ENCODE measurements at regions of chr1 and their contacts with region 1.

Region 1: DNA sequence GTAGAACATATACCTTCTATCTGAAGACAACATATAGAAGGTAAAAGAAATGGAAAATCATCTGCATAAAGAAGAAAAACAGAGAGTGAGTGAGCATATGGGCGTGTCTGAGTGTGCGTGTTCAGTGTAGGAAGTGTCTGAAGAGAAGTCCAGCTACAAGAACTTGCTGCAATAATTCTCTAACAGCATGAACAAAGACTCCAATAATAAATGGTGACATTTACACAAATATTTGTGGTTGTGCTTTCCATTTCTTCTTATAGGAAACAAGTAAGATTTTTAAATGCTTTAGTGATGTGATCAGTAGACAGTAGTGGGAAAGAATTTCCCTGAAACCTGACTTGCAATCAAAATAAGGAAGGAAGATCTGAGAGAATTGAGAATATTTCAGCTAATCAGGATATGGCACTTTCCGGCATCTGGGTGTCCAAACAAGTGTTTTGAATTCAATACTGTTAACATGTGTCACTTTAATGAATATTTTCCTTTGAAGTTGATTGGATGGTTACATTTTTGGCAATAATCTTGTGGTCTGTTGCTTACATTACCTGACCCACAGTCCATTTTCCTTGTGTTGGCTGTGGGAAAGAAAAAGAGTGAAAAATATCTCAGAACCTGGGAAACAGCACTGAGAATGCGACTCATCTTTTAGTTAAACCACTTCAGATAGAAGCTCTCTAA is 154.0 kb downstream of the TGFB2 start:
- DNase-seq: peak; percentile 83
- H3K4me3 ChIP-seq: peak overlapping the region in 1 of 3 experiments; percentile 60
- H3K27ac ChIP-seq: peak overlapping the region; percentile 93
- H3K4me1 ChIP-seq: peaks cover 29% of the 10 kb centered on the region
- H3K27me3 ChIP-seq: no peaks in the 10 kb centered on the region
- CTCF ChIP-seq: no peak
- POLR2A ChIP-seq: no peak

Region 2: DNA sequence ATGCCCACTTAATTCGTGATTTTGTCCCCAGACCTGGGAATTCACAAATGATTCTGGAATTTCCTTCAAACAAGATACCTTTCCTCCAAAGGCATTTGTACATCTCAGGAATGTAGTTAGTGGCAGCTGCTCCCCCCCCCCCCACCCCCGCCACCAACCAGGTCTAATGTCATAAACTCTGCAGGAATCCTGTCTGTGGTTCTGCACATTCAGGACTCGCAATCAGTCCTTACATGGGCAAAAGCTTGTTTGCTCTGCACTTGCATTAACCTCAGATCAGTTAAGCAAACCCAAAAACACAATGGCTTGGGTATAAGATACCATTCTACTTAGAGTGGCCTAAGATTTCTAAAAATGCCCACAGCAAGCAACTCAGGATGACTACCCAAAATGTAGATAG is 10.2 kb before region 1 on chr1:
- CTCF ChIA-PET with region 1: interaction called, 3 read pairs
- POLR2A ChIA-PET with region 1: interaction called, 3 read pairs
- dilution Hi-C with region 1: no loop called
- intact Hi-C with region 1: loop called (anchors 1 kb)
- DNase-seq: no peak
- H3K4me3 ChIP-seq: no peak overlapping the region
- H3K27ac ChIP-seq: no peak overlapping the region
- H3K4me1 ChIP-seq: peaks cover 11% of the 10 kb centered on the region
- H3K27me3 ChIP-seq: no peaks in the 10 kb centered on the region
- CTCF ChIP-seq: no peak
- POLR2A ChIP-seq: no peak

Region 3: DNA sequence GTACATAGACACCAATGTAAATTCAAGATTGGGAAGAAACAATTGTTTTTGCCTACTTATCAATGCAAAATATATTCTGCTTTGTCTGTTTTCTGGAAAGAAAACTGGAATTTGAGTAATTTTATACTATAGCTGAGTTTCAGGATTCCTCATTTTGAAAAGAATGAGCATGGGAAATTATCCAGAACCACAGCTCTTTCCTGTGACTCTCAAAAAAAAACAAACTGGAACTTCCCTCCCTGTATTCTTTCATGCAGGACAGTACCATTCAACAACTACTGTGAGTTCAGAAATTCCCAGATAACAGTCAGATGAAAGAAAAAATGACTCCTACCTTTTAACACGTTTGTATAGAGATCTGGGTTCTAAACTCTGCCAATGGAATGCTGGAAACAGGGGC is 218.4 kb after region 1 on chr1:
- CTCF ChIA-PET with region 1: no interaction called
- POLR2A ChIA-PET with region 1: no interaction called
- dilution Hi-C with region 1: no loop called
- intact Hi-C with region 1: no loop called
- DNase-seq: peak; percentile 65
- H3K4me3 ChIP-seq: no peak overlapping the region
- H3K27ac ChIP-seq: no peak overlapping the region
- H3K4me1 ChIP-seq: peaks cover 12% of the 10 kb centered on the region
- H3K27me3 ChIP-seq: no peaks in the 10 kb centered on the region
- CTCF ChIP-seq: no peak
- POLR2A ChIP-seq: no peak

Measured in endothelial cell of umbilical vein (primary cell).